ENCODE measurements at regions of chr16 and their contacts with region 1.

Region 1: DNA sequence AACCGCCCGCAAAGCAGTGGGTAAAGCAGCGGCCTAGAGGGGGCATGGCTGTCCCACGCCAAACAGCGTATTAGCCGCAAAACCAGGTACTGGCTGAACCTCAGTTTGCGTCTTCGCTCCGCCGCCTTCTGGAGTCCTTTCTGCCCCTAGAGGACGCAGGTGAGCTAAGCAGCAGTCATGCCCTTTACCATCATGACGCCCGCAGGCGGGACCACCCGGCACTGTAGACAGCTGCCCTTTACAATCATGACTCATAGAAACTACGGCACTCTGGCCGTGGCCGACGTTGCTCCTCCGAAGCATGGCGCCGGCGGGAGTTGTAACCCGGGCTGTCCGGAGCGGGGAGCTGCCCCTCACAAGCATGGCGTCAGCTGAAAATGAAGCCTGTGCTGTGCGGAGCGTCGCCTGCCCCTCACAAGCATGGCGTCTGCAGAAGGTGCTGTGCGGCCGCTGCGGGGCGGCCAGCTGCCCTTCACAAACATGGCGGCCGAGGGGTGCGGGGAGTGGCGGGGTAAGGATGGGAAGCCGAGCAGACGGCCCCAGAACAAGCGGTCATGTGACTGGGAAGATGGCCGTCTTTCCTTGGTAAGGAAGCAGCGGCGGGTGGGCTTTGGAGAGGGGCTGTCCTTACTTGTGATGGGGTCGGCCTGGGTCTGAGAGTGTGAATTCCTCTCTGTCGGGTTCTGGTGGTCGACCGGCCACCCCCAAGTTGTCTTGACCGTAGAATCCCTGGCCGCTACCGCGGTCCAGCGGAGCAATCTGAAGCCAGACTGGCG is at the start of gene VPS35L:
- DNase-seq: peak; percentile 91
- ATAC-seq: peak; percentile 89
- H3K4me3 ChIP-seq: peak within 1 kb of the TSS; percentile 65 to 67
- H3K27ac ChIP-seq: peak within 1 kb of the TSS; percentile 78
- H3K4me1 ChIP-seq: peaks cover 0 to 8% of the 10 kb centered on the region in 2 experiments; a peak in 2 of 4 replicates
- H3K27me3 ChIP-seq: no peaks in the 10 kb centered on the region
- CTCF ChIP-seq: peak; percentile 38 to 50 (median 43); a peak in 4 of 6 replicates
- POLR2A ChIP-seq: no peak
- RAD21 ChIP-seq: no peak
- total RNA-seq, gene VPS35L: 21.4 TPM

Region 2: GRCh38 chr16:19542138-19542821 is 13.1 kb before region 1 on chr16:
- CTCF ChIA-PET with region 1: interaction called, 10 read pairs
- POLR2A ChIA-PET with region 1: interaction called, 4 read pairs
- RAD21 ChIA-PET with region 1: no interaction called
- intact Hi-C with region 1: no loop called
- DNase-seq: no peak
- ATAC-seq: no peak
- H3K4me3 ChIP-seq: no peak overlapping the region
- H3K27ac ChIP-seq: no peak overlapping the region
- H3K4me1 ChIP-seq: peaks cover 0 to 5% of the 10 kb centered on the region in 2 experiments; a peak in 1 of 4 replicates
- H3K27me3 ChIP-seq: no peaks in the 10 kb centered on the region
- CTCF ChIP-seq: no peak
- POLR2A ChIP-seq: no peak
- RAD21 ChIP-seq: no peak

Region 3: GRCh38 chr16:19655242-19655777 is 100.0 kb after region 1 on chr16:
- CTCF ChIA-PET with region 1: no interaction called
- POLR2A ChIA-PET with region 1: no interaction called
- RAD21 ChIA-PET with region 1: no interaction called
- intact Hi-C with region 1: no loop called
- DNase-seq: no peak
- ATAC-seq: no peak
- H3K4me3 ChIP-seq: no peak overlapping the region
- H3K27ac ChIP-seq: no peak overlapping the region
- H3K4me1 ChIP-seq: no peaks in the 10 kb centered on the region
- H3K27me3 ChIP-seq: no peaks in the 10 kb centered on the region
- CTCF ChIP-seq: no peak
- POLR2A ChIP-seq: no peak
- RAD21 ChIP-seq: no peak

Region 4: GRCh38 chr16:19886073-19886941 is 331.0 kb after region 1 on chr16:
- CTCF ChIA-PET with region 1: interaction called, 4 read pairs
- POLR2A ChIA-PET with region 1: interaction called, 3 read pairs
- RAD21 ChIA-PET with region 1: no interaction called
- intact Hi-C with region 1: loop called (anchors 1 kb)
- DNase-seq: peak; percentile 72
- ATAC-seq: peak; percentile 76
- H3K4me3 ChIP-seq: no peak overlapping the region
- H3K27ac ChIP-seq: no peak overlapping the region
- H3K4me1 ChIP-seq: peaks cover 3 to 15% of the 10 kb centered on the region in 2 experiments; a peak in 3 of 4 replicates
- H3K27me3 ChIP-seq: no peaks in the 10 kb centered on the region
- CTCF ChIP-seq: peak; percentile 93 to 100 (median 99)
- POLR2A ChIP-seq: no peak
- RAD21 ChIP-seq: peak; percentile 99